ENCODE measurements at regions of chr3 and their contacts with region 1.

Region 1: GRCh38 chr3:19866751-19867347 is 67.2 kb downstream of the EFHB start:
- DNase-seq: peak in 2 of 5 donors; percentile 14 to 23
- ATAC-seq: peak in 3 of 4 donors; percentile 46 to 64 (median 59)
- H3K4me3 ChIP-seq: no peak overlapping the region
- H3K27ac ChIP-seq: peak overlapping the region in 1 of 12 donors; percentile 27
- H3K4me1 ChIP-seq: peaks cover 0 to 3% (median 0%) of the 10 kb centered on the region in 12 donors
- H3K27me3 ChIP-seq: peaks cover 0 to 4% (median 0%) of the 10 kb centered on the region in 9 donors
- CTCF ChIP-seq: peak; percentile 59 to 84 (median 76)
- POLR2A ChIP-seq: no peak

Region 2: DNA sequence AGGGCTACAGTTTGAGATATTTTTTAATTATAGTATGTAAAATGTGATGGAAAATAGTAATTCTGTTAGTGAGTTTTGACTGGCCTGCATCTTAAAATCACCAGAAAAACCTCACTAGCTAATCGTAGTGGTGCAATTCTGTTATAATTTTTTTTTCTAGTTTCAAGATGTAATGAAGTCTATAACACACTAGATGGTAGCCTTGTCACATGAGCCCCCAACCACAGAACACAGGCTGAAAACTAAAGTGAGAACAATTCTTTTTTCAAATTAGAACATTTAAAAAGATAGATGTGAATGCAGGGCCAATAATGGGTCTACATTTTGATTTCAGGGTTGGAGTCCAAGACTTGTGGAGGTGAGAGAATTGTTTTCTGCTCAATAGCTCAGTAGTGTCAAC is 801.8 kb before region 1 on chr3:
- intact Hi-C with region 1: loop called (anchors 5 to 10 kb)
- DNase-seq: no peak
- ATAC-seq: no peak
- H3K4me3 ChIP-seq: no peak overlapping the region
- H3K27ac ChIP-seq: no peak overlapping the region
- H3K4me1 ChIP-seq: no peaks in the 10 kb centered on the region
- H3K27me3 ChIP-seq: no peaks in the 10 kb centered on the region
- CTCF ChIP-seq: peak in 11 of 12 donors; percentile 17 to 56 (median 33)
- POLR2A ChIP-seq: no peak

Region 3: GRCh38 chr3:19146685-19147650 is 719.9 kb before region 1 on chr3:
- intact Hi-C with region 1: loop called in 4 of 10 experiments (anchors 5 to 10 kb)
- DNase-seq: peak; percentile 55 to 73 (median 64)
- ATAC-seq: peak; percentile 58 to 92 (median 84)
- H3K4me3 ChIP-seq: peak overlapping the region; percentile 44 to 76 (median 66)
- H3K27ac ChIP-seq: peak overlapping the region in 2 of 12 donors; percentile 17 to 18
- H3K4me1 ChIP-seq: peaks cover 0 to 24% (median 10%) of the 10 kb centered on the region in 12 donors
- H3K27me3 ChIP-seq: peaks cover 4 to 38% (median 20%) of the 10 kb centered on the region in 9 donors
- CTCF ChIP-seq: peak in 10 of 12 donors; percentile 11 to 44 (median 26)
- POLR2A ChIP-seq: no peak

Region 4: DNA sequence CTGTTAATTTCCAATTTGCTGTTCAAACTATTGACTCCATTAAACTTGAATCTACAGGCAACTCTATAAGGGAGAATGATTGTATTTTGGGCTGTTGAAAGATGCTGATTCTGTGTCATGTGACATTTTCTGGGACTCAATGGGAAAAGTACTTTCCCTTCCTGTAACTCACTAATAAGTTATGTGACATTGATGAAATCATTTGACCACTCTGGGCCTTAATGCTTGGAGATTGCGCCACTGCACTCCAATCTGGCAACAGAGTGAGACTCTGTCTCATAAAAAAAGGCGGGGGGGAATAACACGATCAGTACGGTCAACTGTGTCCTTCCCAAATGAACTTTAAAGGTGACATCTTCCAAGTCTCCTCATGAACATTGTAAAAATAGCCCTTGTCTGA is 534.4 kb after region 1 on chr3:
- intact Hi-C with region 1: no loop called
- DNase-seq: no peak
- ATAC-seq: no peak
- H3K4me3 ChIP-seq: no peak overlapping the region
- H3K27ac ChIP-seq: no peak overlapping the region
- H3K4me1 ChIP-seq: peaks cover 0 to 12% (median 0%) of the 10 kb centered on the region in 12 donors
- H3K27me3 ChIP-seq: no peaks in the 10 kb centered on the region
- CTCF ChIP-seq: no peak
- POLR2A ChIP-seq: no peak

Measured in heart left ventricle (tissue), 16 donors.